ENCODE measurements at regions of chr12 and their contacts with region 1.

Region 1: DNA sequence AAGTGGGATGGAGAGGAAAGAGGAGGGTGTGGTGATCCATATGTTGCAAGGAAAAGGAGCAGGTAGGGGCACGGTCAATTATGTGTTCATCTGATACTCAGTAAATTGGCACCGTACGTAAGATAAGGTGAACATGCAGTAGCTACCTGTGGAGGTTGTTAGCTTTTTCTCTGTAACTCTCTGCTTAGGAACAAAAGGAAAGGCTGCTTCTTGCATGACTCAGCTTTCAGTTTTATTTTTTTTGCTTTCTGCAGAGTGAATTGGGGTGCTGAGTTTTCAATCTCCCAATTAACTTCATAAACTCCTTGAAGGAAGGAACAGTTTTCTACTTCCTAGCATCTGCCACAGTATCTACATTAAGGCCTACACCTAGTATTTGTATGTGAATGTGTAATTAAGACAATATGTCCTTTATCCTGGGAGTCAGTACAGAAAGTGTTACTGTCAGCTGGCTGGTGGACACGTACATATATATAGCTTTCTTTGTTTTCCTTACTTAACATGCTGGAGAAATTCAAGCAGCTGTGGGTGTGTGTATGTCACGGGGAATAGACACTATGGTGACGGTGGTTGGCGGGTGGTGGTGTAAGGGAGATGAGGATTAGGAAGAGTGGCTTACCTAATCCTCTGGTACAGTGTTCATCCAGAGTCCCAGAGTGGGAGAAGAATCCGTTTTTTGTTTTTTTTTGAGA is 40.1 kb upstream of the WNK1 start:
- DNase-seq: no peak
- H3K4me3 Mint-ChIP-seq: peak overlapping the region; percentile 25
- H3K27ac Mint-ChIP-seq: peak overlapping the region; percentile 81
- H3K4me1 Mint-ChIP-seq: peaks cover 26% of the 10 kb centered on the region
- H3K27me3 Mint-ChIP-seq: no peaks in the 10 kb centered on the region

Region 2: DNA sequence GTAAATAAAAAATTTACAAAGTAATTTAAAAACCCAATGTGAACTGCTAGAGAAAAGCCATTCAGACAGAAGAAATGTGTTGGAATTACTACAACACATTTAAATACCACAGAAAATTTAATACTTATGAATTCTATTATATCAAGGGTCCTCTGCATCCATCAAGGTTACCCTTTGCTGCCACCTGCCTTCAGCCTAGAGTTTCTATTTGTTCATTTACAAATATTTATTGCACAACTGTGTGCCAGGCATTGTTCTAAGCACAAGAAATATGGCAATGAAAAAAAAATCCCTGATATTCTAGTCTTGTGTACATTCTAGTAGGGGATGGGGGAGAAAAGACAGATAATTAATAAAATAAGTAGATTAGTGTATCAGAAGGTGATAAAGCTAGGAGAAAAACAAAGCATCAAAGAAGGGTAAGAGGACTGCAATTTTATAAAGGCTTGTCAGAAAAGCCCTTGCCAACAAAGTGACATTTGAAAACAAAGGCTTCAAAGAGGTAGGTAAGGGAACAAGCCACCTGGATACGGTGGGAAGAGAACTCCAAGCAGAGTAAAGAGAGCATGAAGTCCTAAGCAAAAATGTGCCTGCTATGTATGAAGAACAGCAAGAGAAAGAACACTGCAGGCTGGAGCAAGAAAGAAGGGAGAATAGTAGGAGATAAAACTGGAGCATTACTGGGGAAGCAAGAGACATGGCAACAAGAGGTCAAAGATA is 390.6 kb before region 1 on chr12:
- intact Hi-C with region 1: no loop called
- DNase-seq: no peak
- H3K4me3 Mint-ChIP-seq: no peak overlapping the region
- H3K27ac Mint-ChIP-seq: no peak overlapping the region
- H3K4me1 Mint-ChIP-seq: peaks cover 10% of the 10 kb centered on the region
- H3K27me3 Mint-ChIP-seq: no peaks in the 10 kb centered on the region

Region 3: GRCh38 chr12:622416-622815 is 89.9 kb before region 1 on chr12:
- intact Hi-C with region 1: loop called (anchors 5 kb)
- DNase-seq: peak; percentile 81
- H3K4me3 Mint-ChIP-seq: peak overlapping the region; percentile 58
- H3K27ac Mint-ChIP-seq: peak overlapping the region; percentile 95
- H3K4me1 Mint-ChIP-seq: peaks cover 44% of the 10 kb centered on the region
- H3K27me3 Mint-ChIP-seq: no peaks in the 10 kb centered on the region

Region 4: DNA sequence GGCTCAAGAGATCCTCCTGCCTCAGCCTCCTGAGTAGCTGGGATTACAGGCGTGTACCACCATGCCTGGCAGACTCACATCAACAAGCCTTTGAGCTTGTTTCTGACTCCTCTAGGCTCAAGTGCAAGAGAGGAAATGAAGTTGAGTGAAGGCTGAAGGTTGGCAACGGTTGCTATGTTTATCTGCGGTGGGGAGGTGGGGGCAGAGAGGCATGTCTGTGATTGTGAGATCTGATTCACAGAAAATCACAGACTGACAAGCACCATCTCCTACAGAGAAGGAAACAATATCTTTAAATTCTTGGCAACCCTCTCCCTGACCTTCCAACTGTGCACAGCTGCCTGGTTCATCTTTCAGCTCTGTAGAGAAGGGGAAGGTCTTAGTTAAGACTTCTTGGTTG is 26.9 kb before region 1 on chr12:
- intact Hi-C with region 1: loop called (anchors 1 kb)
- DNase-seq: peak; percentile 95
- H3K4me3 Mint-ChIP-seq: peak overlapping the region; percentile 21
- H3K27ac Mint-ChIP-seq: peak overlapping the region; percentile 86
- H3K4me1 Mint-ChIP-seq: peaks cover 24% of the 10 kb centered on the region
- H3K27me3 Mint-ChIP-seq: no peaks in the 10 kb centered on the region

Region 5: DNA sequence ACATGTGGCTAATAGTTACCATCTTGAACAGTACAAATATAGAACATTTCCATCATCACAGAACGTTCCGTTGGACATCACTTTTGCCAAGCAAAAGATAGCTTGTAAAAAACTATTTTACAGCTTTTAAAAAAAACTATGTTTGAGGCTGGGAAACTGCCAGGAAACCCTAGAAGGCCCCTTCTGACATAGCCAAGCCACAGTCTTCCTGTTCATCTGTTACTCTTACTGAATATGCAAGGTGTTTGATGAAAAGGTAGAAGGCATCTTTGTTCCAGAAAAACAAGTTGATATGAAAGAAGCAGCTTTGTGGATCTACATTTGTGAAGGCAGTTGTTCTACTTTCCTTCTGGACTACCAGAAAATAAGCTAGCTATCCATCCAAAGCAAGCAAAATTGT is 16.5 kb after region 1 on chr12:
- intact Hi-C with region 1: loop called (anchors 2 kb)
- DNase-seq: peak; percentile 78
- H3K4me3 Mint-ChIP-seq: peak overlapping the region; percentile 10
- H3K27ac Mint-ChIP-seq: peak overlapping the region; percentile 30
- H3K4me1 Mint-ChIP-seq: peaks cover 43% of the 10 kb centered on the region
- H3K27me3 Mint-ChIP-seq: no peaks in the 10 kb centered on the region

Region 6: DNA sequence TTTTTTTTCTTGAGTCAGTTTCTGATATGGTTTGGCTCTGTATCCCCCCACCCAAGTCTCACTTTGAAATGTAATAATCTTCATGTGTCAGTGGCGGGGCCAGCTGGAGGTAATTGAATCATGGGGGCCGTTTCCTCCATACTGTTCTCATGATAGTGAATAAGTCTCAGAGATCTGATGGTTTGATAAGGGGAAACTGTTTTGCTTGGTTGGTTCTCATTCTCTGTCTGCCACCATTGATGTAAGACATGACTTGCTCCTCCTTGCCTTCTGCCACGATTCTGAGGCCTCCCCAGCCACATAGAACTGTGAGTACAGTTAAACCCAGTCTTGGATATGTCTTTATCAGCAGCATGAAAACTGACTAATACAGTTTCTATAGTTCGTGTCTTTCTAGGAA is 83.0 kb after region 1 on chr12:
- intact Hi-C with region 1: loop called (anchors 1 kb)
- DNase-seq: peak; percentile 78
- H3K4me3 Mint-ChIP-seq: peak overlapping the region; percentile 68
- H3K27ac Mint-ChIP-seq: peak overlapping the region; percentile 94
- H3K4me1 Mint-ChIP-seq: peaks cover 58% of the 10 kb centered on the region
- H3K27me3 Mint-ChIP-seq: no peaks in the 10 kb centered on the region